ENCODE measurements at regions of chr3 and their contacts with region 1.

Region 1: GRCh38 chr3:183298701-183299153 is 45.7 kb downstream of the B3GNT5 start:
- DNase-seq: peak; percentile 89 to 95
- ATAC-seq: peak; percentile 66 to 68
- H3K4me3 ChIP-seq: no peak overlapping the region
- H3K27ac ChIP-seq: peak overlapping the region; percentile 89 to 99 (median 94)
- H3K4me1 ChIP-seq: peaks cover 63 to 78% of the 10 kb centered on the region in 2 donors
- H3K27me3 ChIP-seq: no peaks in the 10 kb centered on the region
- CTCF ChIP-seq: no peak
- POLR2A ChIP-seq: peak; percentile 23 to 52

Region 2: GRCh38 chr3:184811999-184812661 is 1513.4 kb after region 1 on chr3 and contains the start of gene VPS8:
- in situ Hi-C with region 1: no loop called
- intact Hi-C with region 1: loop called (anchors 10 kb)
- DNase-seq: peak; percentile 92 to 96
- ATAC-seq: peak; percentile 81 to 83
- H3K4me3 ChIP-seq: peak within 1 kb of the TSS; percentile 70 to 87 (median 82)
- H3K27ac ChIP-seq: peak within 1 kb of the TSS; percentile 89 to 94 (median 90)
- H3K4me1 ChIP-seq: peaks cover 45 to 51% of the 10 kb centered on the region in 2 donors
- H3K27me3 ChIP-seq: no peaks in the 10 kb centered on the region
- CTCF ChIP-seq: peak in 4 of 5 experiments; percentile 77 to 89 (median 81)
- POLR2A ChIP-seq: peak; percentile 98
- total RNA-seq, gene VPS8: 37.2 to 64.1 (median 51.2) TPM